RWPE1 (cell line): ENCODE measurements at regions of chr2 and their contacts with region 1.

Region 1: DNA sequence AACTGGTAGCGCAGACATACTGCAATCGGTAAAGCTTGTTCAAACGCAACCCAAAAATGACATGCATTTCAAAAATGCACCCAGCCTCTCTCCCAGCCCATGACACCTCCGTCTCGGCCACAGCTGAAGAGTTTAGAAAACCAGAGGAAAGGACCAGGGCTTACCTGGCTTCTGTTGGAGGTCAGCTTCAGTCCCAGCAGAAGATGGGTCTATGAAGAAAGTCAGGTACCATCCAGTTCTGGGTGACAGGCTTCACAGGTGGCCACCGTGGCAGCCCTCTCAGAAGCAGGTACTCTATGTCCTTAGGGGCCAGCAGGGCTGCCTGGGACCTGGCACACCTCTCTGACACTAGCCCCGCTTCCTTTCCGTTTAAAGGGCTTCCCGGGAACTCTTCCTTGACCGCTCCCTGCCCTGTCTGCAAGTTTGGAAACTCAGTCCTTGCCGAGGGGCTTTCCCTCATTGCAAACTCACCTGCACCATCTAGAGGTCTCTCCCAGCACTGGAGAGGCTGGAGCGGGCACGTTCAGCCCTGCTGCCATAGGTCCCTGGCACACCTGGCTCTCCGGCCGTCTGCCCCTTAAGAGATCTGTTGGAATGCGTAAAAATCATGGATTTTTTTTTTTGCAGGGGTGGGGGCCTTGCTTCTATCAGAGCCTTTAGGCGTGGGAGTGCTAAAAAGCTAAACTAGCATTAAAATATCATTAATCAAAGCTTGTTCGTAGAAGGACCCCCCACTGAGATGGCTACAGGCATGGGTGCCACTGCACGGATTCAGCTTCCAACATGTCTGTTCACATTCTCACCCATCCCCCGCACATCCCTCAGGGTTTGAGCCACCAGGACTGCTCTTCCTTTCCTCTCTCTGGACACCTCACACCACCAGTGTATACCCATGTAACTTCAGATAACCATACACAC is at the start of gene EDAR:
- DNase-seq: peak; percentile 89
- H3K27ac ChIP-seq: peak within 1 kb of the TSS; percentile 31; the same call in 1 of the 2 replicates
- CTCF ChIP-seq: peak; percentile 87

Region 2: DNA sequence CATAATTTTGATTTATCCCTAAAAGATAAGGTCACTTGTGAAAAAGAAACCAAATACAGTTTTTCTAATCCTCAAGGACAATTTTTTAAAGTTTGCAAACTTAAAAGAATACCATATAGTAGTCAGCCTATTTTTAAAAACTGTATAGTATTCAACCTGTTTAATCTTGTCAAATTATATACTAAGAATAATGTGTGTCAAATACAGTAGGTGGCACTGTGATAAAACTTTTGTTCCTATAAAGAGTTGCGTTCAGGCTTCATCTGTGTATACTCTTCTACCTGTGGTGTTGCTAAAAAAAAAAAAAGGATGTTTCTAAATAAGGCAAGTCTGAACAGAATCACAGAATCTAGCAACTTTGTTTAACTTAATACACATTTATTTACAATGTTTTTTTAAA is 133.9 kb before region 1 on chr2:
- CTCF ChIA-PET with region 1: interaction called, 21 read pairs
- POLR2A ChIA-PET with region 1: no interaction called
- DNase-seq: peak; percentile 19
- H3K27ac ChIP-seq: no peak overlapping the region
- CTCF ChIP-seq: peak; percentile 50

Region 3: GRCh38 chr2:108927936-108928659 is 61.0 kb before region 1 on chr2:
- CTCF ChIA-PET with region 1: interaction called, 19 read pairs
- POLR2A ChIA-PET with region 1: no interaction called
- DNase-seq: peak; percentile 58
- H3K27ac ChIP-seq: no peak overlapping the region
- CTCF ChIP-seq: peak; percentile 88

Region 4: DNA sequence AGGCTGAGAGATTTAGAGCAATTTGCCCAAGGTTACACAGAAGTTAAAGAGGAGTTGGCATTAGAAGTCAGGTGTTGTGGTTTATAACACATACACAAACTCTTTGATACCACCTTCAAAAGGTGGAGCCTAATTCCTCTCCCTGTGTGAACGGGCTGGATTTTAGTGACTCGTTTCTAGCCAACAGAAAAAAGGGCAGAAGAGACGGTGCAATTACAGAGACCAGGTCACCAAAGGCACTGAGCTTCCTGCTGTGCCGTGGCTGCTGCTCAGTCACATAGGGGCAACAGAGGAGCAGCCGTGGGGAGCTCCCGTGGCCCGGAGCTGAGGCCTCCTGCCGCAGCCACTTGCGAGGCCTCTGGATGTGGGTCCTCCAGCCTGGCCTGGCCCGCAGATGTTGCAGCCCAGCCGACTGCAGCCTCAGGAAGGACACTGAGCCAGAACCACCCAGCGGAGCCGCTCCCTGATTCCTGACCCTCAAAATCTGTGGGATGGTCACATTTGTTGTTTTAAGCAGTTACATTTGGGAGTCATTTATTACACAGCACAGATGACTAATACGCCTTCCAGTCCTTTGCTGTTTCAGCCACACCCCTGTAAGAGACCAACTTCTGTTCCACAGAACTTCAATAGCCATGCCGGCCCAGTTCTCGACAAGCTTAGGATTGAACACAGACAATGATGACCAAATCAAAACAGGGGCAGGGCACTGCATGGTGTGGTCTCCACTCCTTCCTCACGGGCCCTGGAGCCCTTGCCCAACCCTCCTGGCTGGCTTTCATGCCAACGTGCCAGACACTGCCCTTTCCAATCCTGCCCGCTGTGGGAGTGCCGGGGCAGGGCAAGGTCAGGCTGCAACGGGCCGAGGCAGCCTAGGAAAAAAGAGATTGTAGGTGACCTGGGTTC is 17.1 kb before region 1 on chr2:
- CTCF ChIA-PET with region 1: interaction called, 11 read pairs
- POLR2A ChIA-PET with region 1: no interaction called
- DNase-seq: peak; percentile 87
- H3K27ac ChIP-seq: peak overlapping the region; percentile 92
- CTCF ChIP-seq: no peak

Region 5: GRCh38 chr2:109054865-109055264 is 65.8 kb after region 1 on chr2:
- CTCF ChIA-PET with region 1: interaction called, 4 read pairs
- POLR2A ChIA-PET with region 1: interaction called, 11 read pairs
- DNase-seq: peak; percentile 42
- H3K27ac ChIP-seq: no peak overlapping the region
- CTCF ChIP-seq: no peak